PC-9 (cell line): ENCODE measurements at regions of chr1 and their contacts with region 1.

Region 1: DNA sequence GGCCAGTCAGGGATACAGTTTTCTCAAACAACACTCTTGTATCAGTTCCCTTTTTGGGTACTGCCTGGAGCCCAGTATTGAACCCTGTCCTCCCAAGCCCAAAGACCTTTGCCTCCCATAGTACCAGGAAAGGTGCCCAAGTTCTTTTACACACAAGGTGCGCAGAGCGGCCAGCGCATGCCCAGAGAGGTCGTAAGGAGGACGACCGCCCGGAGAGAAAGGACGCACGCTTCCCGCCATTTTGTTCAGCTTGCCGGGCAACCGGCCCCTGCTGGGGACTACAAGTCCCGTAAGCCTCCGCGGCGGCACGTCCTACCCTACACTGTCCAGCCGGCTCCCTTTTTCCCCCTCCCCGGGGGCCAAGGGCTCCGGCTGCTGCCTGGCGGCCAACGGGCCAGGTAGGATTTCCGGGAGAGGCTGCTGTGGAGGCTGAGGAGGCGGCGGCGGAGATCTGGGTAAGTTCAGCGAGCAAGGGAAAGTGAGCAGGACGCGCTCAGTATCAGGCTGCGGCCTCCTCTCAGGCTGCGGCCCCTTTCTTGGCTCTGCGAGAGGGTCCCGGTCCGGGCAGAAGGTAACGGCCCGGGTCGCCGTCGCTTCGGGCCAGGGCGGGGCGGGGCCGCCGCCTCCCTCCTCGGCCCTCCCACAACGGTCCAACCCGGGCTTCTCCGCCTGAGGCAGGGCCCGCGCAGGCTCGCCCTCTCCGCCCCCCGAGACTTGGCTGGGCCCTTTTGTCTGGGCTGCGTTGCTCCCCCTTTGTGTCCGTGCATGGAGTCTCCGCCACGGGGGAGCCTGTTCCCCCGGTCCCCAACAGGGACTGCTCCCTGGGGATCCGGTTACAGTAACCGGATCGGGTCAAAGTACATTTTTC is at the start of gene PHACTR4:
- DNase-seq: peak; percentile 77 to 93
- H3K4me3 ChIP-seq: peak within 1 kb of the TSS; percentile 67
- H3K27ac ChIP-seq: peak within 1 kb of the TSS; percentile 52
- H3K4me1 ChIP-seq: peaks cover 23% of the 10 kb centered on the region
- H3K27me3 ChIP-seq: no peaks in the 10 kb centered on the region
- CTCF ChIP-seq: no peak
- total RNA-seq, gene PHACTR4: 33.2 and 45.1 TPM in 2 replicates

Region 2: GRCh38 chr1:28172713-28173150 is 196.9 kb before region 1 on chr1:
- CTCF ChIA-PET with region 1: no interaction called
- POLR2A ChIA-PET with region 1: no interaction called
- intact Hi-C with region 1: no loop called
- DNase-seq: no peak
- H3K4me3 ChIP-seq: no peak overlapping the region
- H3K27ac ChIP-seq: no peak overlapping the region
- H3K4me1 ChIP-seq: no peaks in the 10 kb centered on the region
- H3K27me3 ChIP-seq: no peaks in the 10 kb centered on the region
- CTCF ChIP-seq: no peak

Region 3: GRCh38 chr1:28456078-28456477 is 86.5 kb after region 1 on chr1:
- CTCF ChIA-PET with region 1: no interaction called
- POLR2A ChIA-PET with region 1: interaction called, 25 read pairs
- intact Hi-C with region 1: no loop called
- DNase-seq: no peak
- H3K4me3 ChIP-seq: no peak overlapping the region
- H3K27ac ChIP-seq: no peak overlapping the region
- H3K4me1 ChIP-seq: peaks cover 6% of the 10 kb centered on the region; the same call in 1 of the 2 replicates
- H3K27me3 ChIP-seq: no peaks in the 10 kb centered on the region
- CTCF ChIP-seq: no peak